ENCODE measurements at regions of chr22 and their contacts with region 1.

Region 1: GRCh38 chr22:23385291-23386244 is 194.5 kb downstream of the IGLL1 start:
- DNase-seq: peak; percentile 69
- H3K4me3 Mint-ChIP-seq: no peak overlapping the region
- H3K27ac Mint-ChIP-seq: no peak overlapping the region
- H3K4me1 Mint-ChIP-seq: no peaks in the 10 kb centered on the region
- H3K27me3 Mint-ChIP-seq: no peaks in the 10 kb centered on the region

Region 2: GRCh38 chr22:23315341-23315917 is 70.1 kb before region 1 on chr22:
- intact Hi-C with region 1: loop called (anchors 5 kb)
- DNase-seq: peak; percentile 30
- H3K4me3 Mint-ChIP-seq: no peak overlapping the region
- H3K27ac Mint-ChIP-seq: no peak overlapping the region
- H3K4me1 Mint-ChIP-seq: no peaks in the 10 kb centered on the region
- H3K27me3 Mint-ChIP-seq: no peaks in the 10 kb centered on the region

Region 3: DNA sequence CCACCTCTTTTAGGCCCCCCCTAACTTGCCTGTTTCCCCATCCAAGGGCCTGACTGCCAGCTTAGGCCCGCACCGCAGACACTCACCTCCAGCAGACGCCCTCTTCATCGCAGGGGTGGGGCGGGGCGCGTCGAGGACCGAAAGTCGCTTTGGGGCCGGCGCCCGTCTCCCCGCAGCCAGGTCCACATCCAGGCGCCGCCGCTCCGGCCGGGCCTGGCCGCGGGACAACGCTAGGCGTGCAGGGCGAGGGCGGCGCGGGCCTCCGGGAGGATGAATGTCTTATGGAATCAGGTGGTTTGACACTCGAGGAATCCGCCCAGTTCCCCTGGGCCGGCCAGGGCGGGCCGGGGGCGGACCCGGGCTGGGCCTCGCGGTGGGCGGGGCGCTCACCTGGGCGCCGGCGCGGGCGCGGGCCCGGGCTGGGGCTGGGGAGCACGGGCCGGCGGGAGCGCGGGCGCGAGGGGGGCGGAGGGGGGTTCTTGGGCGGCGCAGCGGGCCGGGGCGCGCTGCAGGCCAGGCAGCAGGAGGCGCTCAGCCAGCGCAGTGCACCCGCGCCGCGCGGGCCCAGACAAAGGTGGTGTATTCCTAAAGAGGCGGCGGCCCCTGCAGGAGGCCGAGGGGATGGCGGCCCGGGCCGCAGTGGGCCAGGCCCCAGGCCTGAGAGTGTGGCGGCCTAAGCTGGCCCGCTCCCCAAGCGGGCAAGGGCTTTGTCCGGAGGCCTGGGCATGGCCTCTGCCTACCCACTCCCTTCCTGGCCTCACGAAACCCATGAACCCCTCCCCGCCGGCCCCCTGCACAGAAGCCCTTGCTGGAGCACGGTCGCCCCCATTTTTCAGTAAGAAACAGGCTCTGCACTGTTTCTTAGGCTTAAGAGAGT is 16.9 kb after region 1 on chr22:
- intact Hi-C with region 1: no loop called
- DNase-seq: peak; percentile 26
- H3K4me3 Mint-ChIP-seq: no peak overlapping the region
- H3K27ac Mint-ChIP-seq: no peak overlapping the region
- H3K4me1 Mint-ChIP-seq: no peaks in the 10 kb centered on the region
- H3K27me3 Mint-ChIP-seq: peaks cover 2% of the 10 kb centered on the region

Region 4: DNA sequence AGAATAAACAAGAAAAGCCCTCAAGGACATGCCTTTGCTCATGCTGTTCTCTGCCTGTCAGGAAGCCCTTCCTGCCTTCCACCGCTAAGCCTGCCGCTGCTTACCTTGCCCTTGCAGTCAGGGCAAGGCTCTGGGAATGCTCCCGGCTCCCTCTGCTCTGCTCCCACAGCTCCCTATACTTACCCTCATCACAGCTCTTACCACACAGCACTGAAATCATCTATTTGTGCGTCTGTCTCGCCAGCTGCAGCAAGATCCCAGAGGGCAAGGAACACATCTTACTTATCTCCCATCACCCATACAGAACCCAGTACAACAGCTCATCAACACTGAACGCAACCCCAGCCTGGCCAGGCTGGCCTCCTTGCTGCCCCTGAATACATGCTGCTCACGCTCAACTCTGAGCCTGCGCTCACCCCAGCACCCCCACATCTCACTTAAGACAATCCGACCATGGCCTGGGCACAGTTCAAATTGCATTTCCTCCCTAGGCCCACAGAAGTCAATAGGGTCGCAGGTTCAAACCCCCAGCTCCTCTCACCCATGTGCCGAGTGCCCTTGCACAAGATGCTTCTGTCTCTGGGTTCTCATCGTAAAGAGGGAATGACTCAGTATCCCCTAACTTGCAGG is 32.7 kb after region 1 on chr22:
- intact Hi-C with region 1: no loop called
- DNase-seq: no peak
- H3K4me3 Mint-ChIP-seq: no peak overlapping the region
- H3K27ac Mint-ChIP-seq: no peak overlapping the region
- H3K4me1 Mint-ChIP-seq: no peaks in the 10 kb centered on the region
- H3K27me3 Mint-ChIP-seq: no peaks in the 10 kb centered on the region

Region 5: GRCh38 chr22:23639661-23640060 is 254.1 kb after region 1 on chr22:
- intact Hi-C with region 1: no loop called
- DNase-seq: no peak
- H3K4me3 Mint-ChIP-seq: no peak overlapping the region
- H3K27ac Mint-ChIP-seq: no peak overlapping the region
- H3K4me1 Mint-ChIP-seq: no peaks in the 10 kb centered on the region
- H3K27me3 Mint-ChIP-seq: no peaks in the 10 kb centered on the region